CD4-positive, alpha-beta memory T cell (primary cell): ENCODE measurements at regions of chr12 and their contacts with region 1.

Region 1: DNA sequence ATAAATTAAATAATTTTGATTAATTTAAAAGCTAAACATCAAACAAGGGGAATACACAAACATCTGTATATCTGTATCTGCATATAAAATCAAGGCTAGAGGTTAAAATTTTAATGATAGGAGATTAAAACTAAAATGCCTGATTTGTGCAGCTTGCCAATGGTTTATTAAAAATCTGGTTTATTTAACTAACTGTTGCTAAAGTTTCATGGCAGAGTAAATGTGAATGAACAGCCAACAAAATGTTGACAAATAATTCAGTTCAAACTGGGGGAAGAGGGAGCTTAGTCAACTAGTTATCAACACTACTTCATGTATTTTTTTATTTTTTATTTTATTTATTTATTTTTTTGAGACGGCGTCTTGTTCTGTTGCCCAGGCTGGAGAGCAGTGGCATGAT is 43.0 kb downstream of the BTG1 start:
- DNase-seq: no peak
- H3K4me3 ChIP-seq: no peak overlapping the region
- H3K4me3 Mint-ChIP-seq: no peak overlapping the region
- H3K27ac ChIP-seq: no peak overlapping the region
- H3K27ac Mint-ChIP-seq: peak overlapping the region in 1 of 7 donors; percentile 40
- H3K4me1 ChIP-seq: peaks cover 17% of the 10 kb centered on the region
- H3K4me1 Mint-ChIP-seq: peaks cover 19 to 53% (median 28%) of the 10 kb centered on the region in 4 donors
- H3K27me3 ChIP-seq: no peaks in the 10 kb centered on the region
- H3K27me3 Mint-ChIP-seq: no peaks in the 10 kb centered on the region

Region 2: DNA sequence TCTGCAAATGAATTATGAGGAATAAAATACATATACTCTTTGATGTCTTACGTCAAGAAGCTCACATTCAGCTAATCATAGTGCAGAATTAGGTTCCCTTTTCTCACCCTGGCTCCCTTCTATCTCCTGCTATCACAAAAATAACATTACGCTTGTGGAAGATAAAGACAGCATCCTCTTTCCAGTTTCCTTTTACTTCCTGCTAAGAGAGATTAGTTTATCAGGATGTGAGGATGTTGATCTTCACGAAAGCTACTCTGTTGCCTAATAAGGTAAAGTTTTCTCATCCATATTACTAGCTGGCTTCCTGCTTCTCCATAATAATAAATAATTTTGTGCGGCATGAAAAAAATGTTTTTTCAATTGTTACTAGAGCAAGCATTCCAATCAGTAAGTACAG is 702.3 kb before region 1 on chr12:
- CTCF ChIA-PET with region 1: no interaction called
- POLR2A ChIA-PET with region 1: no interaction called
- intact Hi-C with region 1: no loop called
- DNase-seq: no peak
- H3K4me3 ChIP-seq: no peak overlapping the region
- H3K4me3 Mint-ChIP-seq: no peak overlapping the region
- H3K27ac ChIP-seq: no peak overlapping the region
- H3K27ac Mint-ChIP-seq: no peak overlapping the region
- H3K4me1 ChIP-seq: no peaks in the 10 kb centered on the region
- H3K4me1 Mint-ChIP-seq: no peaks in the 10 kb centered on the region
- H3K27me3 ChIP-seq: no peaks in the 10 kb centered on the region
- H3K27me3 Mint-ChIP-seq: no peaks in the 10 kb centered on the region

Region 3: DNA sequence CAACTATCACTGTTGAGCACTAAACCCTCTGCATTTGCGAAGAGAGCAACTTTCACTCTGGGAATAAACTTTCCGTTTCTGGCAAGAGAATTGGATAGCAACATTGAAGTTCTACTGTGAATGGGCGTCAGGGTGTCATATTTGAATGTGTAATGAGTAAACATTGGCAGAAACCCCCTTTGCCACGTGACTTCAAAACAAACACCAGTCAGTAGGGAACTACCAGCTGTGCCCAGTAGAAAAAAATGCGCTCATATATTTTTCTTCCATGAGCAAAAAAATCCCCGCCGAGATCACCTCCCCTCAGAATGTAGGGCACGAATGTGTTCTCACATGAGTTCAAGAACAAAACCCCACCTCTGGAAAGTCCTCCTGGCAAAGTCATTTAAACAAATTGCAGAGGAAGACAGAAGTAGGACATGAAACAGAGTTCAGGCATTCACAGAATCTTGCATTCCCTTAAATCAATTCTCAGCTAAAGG is 37.5 kb before region 1 on chr12:
- CTCF ChIA-PET with region 1: interaction called, 3 read pairs
- POLR2A ChIA-PET with region 1: no interaction called
- intact Hi-C with region 1: loop called (anchors 5 kb)
- DNase-seq: peak; percentile 56 to 90 (median 71)
- H3K4me3 ChIP-seq: no peak overlapping the region
- H3K4me3 Mint-ChIP-seq: peak overlapping the region in 7 of 8 donors; percentile 8 to 75 (median 70)
- H3K27ac ChIP-seq: no peak overlapping the region
- H3K27ac Mint-ChIP-seq: peak overlapping the region; percentile 6 to 83 (median 72)
- H3K4me1 ChIP-seq: peaks cover 17% of the 10 kb centered on the region
- H3K4me1 Mint-ChIP-seq: peaks cover 20 to 53% (median 35%) of the 10 kb centered on the region in 4 donors
- H3K27me3 ChIP-seq: no peaks in the 10 kb centered on the region
- H3K27me3 Mint-ChIP-seq: no peaks in the 10 kb centered on the region